ENCODE measurements at regions of chr18 and their contacts with region 1.

Region 1: DNA sequence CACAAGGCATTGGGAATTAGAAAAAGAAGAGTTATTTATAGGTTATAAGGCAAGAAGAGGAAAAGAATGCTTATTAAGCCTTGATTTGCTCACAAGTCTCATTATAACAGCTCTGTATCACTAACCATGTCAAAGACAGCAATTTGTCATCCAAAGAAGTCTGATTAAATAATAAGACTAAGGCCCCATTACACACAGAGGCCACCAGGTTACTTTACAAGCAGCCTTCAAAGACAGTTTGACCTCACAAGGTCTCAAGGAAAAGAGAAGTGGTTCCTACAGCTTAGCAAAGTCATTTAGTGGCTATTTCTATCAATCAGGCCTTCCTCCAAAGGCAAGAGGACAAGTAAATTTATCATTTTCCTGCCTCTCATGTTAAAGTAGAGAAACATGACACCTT is 188.5 kb downstream of the MBD2 start:
- DNase-seq: no peak
- H3K4me3 ChIP-seq: no peak overlapping the region
- H3K27ac ChIP-seq: no peak overlapping the region
- H3K4me1 ChIP-seq: no peaks in the 10 kb centered on the region
- H3K27me3 ChIP-seq: no peaks in the 10 kb centered on the region
- CTCF ChIP-seq: no peak
- POLR2A ChIP-seq: no peak

Region 2: GRCh38 chr18:52484977-52485376 is 1551.0 kb before region 1 on chr18:
- intact Hi-C with region 1: no loop called
- DNase-seq: no peak
- H3K4me3 ChIP-seq: no peak overlapping the region
- H3K27ac ChIP-seq: no peak overlapping the region
- H3K4me1 ChIP-seq: no peaks in the 10 kb centered on the region
- H3K27me3 ChIP-seq: peaks cover 0 to 5% of the 10 kb centered on the region in 2 donors
- CTCF ChIP-seq: no peak
- POLR2A ChIP-seq: no peak

Region 3: DNA sequence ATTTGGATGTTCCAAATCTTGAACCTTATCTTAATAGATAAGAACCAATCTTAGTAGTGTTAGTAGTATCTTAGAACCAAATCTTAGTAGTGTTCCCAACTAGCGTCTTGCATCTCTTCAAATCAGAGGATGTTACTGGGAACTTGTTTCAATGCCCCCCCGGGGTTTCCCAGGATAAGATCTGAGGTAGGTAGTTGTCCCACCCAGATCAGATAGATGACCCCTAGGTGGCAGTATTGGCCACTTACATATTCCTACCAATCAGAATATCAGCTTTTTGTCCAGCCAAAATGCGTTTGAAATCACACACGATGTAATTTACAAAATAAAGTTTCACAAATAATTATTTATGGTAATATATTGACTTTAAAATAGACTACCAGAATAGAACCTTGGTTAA is 126.3 kb before region 1 on chr18:
- intact Hi-C with region 1: no loop called
- DNase-seq: no peak
- H3K4me3 ChIP-seq: no peak overlapping the region
- H3K27ac ChIP-seq: no peak overlapping the region
- H3K4me1 ChIP-seq: no peaks in the 10 kb centered on the region
- H3K27me3 ChIP-seq: no peaks in the 10 kb centered on the region
- CTCF ChIP-seq: no peak
- POLR2A ChIP-seq: no peak

Region 4: DNA sequence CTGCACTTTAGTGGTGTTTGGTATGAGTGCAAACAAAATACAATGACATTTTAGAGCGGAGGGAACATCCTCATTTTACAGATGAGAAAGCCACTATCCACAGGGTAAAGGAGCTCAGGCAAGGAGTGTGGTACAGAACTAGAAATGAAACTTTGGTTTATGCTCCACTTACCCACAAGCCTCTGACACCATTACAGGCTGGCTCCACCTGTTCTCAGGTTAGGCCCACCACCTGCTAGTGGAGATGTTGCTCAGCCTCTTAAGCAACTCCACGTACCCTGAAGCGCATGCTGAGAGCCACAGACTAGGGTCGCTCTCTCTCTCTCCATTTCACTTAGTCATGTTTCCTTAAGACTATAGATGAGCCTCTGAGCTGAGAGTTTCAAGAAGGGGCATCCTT is 58.5 kb after region 1 on chr18:
- intact Hi-C with region 1: loop called (anchors 2 kb)
- DNase-seq: no peak
- H3K4me3 ChIP-seq: no peak overlapping the region
- H3K27ac ChIP-seq: no peak overlapping the region
- H3K4me1 ChIP-seq: no peaks in the 10 kb centered on the region
- H3K27me3 ChIP-seq: no peaks in the 10 kb centered on the region
- CTCF ChIP-seq: no peak
- POLR2A ChIP-seq: no peak

Measured in breast epithelium (tissue), 4 donors.